Naive thymus-derived CD4-positive, alpha-beta T cell (primary cell): ENCODE measurements at regions of chr17 and their contacts with region 1.

Region 1: GRCh38 chr17:50345432-50346312 is at the start of gene XYLT2:
- DNase-seq: peak; percentile 89 to 98 (median 93)
- ATAC-seq: peak; percentile 98
- H3K4me3 ChIP-seq: peak within 1 kb of the TSS; percentile 79
- H3K4me3 Mint-ChIP-seq: peak within 1 kb of the TSS; percentile 77 to 94 (median 91)
- H3K27ac ChIP-seq: peak within 1 kb of the TSS; percentile 84
- H3K27ac Mint-ChIP-seq: peak within 1 kb of the TSS; percentile 85 to 95 (median 90)
- H3K4me1 ChIP-seq: peaks cover 22% of the 10 kb centered on the region in 2 donors
- H3K4me1 Mint-ChIP-seq: peaks cover 17 to 45% (median 34%) of the 10 kb centered on the region in 7 donors
- H3K27me3 ChIP-seq: no peaks in the 10 kb centered on the region
- H3K27me3 Mint-ChIP-seq: no peaks in the 10 kb centered on the region
- total RNA-seq, gene XYLT2: 18.6 to 43.7 (median 34.1) TPM

Region 2: DNA sequence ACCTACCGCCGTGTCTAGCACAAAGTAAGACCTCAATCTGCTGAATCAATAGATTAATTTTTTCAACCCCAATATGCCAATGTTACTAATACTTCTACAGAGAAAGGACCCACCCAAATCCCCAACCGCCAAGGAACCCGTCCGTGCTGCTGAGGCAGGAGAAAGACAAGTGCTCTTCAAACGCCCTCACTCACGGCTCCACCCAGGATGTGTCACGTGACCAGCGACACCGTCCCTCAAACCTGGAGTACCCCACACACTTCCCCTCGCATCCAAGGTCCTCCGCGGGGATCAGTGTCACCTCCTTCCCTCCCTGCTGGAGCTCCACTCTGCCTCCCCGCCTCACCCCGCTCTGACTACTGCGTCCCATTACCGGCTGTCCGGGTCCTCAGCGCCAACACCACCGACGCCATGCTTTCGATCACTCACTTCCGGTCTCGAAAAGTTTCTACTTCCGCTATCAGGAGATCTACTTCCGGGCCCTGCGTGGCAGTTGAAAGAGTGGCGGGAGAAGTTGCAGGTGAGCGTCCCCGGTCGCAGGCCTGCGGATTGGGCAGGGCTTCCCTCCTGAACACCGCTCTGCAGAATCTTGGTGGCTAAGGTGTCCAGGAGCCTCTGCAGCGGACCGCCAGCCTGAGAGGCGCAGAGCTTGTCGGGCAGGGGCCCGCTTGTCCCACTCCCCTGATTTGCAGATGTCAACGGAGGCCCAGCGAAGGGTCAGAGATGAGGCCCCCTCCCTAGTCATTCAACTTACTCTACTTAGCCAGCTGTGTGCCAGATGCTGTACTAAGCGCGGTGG is 27.3 kb after region 1 on chr17 and contains the starts of genes EME1 and MRPL27:
- CTCF ChIA-PET with region 1: no interaction called
- POLR2A ChIA-PET with region 1: interaction called, 9 read pairs
- intact Hi-C with region 1: loop called (anchors 1 kb)
- DNase-seq: peak; percentile 81 to 95 (median 92)
- ATAC-seq: peak; percentile 94
- H3K4me3 ChIP-seq: peak within 1 kb of the TSS; percentile 99
- H3K4me3 Mint-ChIP-seq: peak within 1 kb of the TSS; percentile 92 to 100 (median 98)
- H3K27ac ChIP-seq: peak within 1 kb of the TSS; percentile 99
- H3K27ac Mint-ChIP-seq: peak within 1 kb of the TSS; percentile 97 to 100 (median 99)
- H3K4me1 ChIP-seq: peaks cover 9 to 13% of the 10 kb centered on the region in 2 donors
- H3K4me1 Mint-ChIP-seq: peaks cover 18 to 41% (median 31%) of the 10 kb centered on the region in 7 donors
- H3K27me3 ChIP-seq: no peaks in the 10 kb centered on the region
- H3K27me3 Mint-ChIP-seq: no peaks in the 10 kb centered on the region
- total RNA-seq, gene EME1: 0.61 to 17.5 (median 2.2) TPM
- total RNA-seq, gene MRPL27: 29.5 to 64.7 (median 32.0) TPM

Region 3: DNA sequence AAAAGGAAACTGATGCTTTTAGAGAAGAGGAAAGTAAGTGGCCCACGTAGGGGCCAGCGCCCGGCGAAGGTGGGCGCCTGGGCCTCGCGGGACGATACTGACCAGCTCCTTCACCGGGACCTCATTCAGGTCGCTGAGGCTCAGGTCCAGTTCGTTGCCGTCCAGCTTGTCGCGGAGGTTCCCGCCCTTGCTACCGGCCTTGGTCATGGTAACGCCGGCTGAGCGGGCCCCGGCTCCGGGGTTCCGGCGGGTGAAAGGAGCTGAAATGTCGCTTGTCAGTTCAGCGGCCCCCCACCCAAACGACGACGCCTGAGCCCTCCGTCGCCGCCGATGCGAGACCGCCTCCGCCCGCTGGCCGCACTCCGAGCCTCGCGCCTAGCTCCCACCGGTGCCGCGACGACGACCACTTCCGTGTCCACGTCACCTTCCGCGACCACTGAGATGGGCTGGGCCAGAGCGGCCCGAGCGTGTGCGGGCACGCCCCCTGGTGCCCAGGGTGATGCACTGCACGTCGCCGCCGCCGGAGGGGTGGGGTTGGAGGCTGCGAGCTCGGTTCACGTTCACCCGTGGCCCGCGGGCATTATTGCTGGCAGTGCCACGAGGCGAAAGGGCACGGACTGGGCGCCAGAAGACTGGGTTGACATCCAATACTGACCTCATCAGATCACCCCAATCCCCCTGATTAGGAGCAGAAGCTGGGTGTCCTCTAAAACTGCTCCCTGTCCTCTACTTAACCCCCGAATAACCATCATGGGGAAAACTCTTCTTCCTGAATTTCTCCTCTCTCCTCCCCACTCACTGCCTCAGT is 51.6 kb after region 1 on chr17 and contains the start of gene LRRC59:
- CTCF ChIA-PET with region 1: interaction called, 5 read pairs
- POLR2A ChIA-PET with region 1: interaction called, 16 read pairs
- intact Hi-C with region 1: loop called in 1 of 2 experiments (anchors 1 kb)
- DNase-seq: peak; percentile 86 to 99 (median 93)
- ATAC-seq: peak; percentile 100
- H3K4me3 ChIP-seq: peak within 1 kb of the TSS; percentile 69
- H3K4me3 Mint-ChIP-seq: peak within 1 kb of the TSS; percentile 78 to 99 (median 92)
- H3K27ac ChIP-seq: peak within 1 kb of the TSS; percentile 93
- H3K27ac Mint-ChIP-seq: peak within 1 kb of the TSS; percentile 83 to 96 (median 93)
- H3K4me1 ChIP-seq: peaks cover 15 to 18% of the 10 kb centered on the region in 2 donors
- H3K4me1 Mint-ChIP-seq: peaks cover 21 to 47% (median 34%) of the 10 kb centered on the region in 7 donors
- H3K27me3 ChIP-seq: no peaks in the 10 kb centered on the region
- H3K27me3 Mint-ChIP-seq: no peaks in the 10 kb centered on the region
- total RNA-seq, gene LRRC59: 27.6 to 67.1 (median 42.4) TPM

Region 4: GRCh38 chr17:50547035-50547735 is 201.5 kb after region 1 on chr17 and contains the start of gene SPATA20:
- CTCF ChIA-PET with region 1: no interaction called
- POLR2A ChIA-PET with region 1: no interaction called
- intact Hi-C with region 1: no loop called
- DNase-seq: peak; percentile 73 to 86 (median 83)
- ATAC-seq: peak; percentile 90
- H3K4me3 ChIP-seq: peak within 1 kb of the TSS; percentile 65
- H3K4me3 Mint-ChIP-seq: peak within 1 kb of the TSS; percentile 52 to 85 (median 76)
- H3K27ac ChIP-seq: peak within 1 kb of the TSS; percentile 66
- H3K27ac Mint-ChIP-seq: peak within 1 kb of the TSS in 5 of 9 donors; percentile 37 to 87 (median 81)
- H3K4me1 ChIP-seq: peaks cover 11% of the 10 kb centered on the region in 2 donors
- H3K4me1 Mint-ChIP-seq: peaks cover 0 to 25% (median 20%) of the 10 kb centered on the region in 7 donors
- H3K27me3 ChIP-seq: no peaks in the 10 kb centered on the region
- H3K27me3 Mint-ChIP-seq: peaks cover 0 to 28% (median 7%) of the 10 kb centered on the region in 5 donors
- total RNA-seq, gene SPATA20: 14.3 to 19.4 (median 16.4) TPM